Posterior vena cava (tissue), 2 donors: ENCODE measurements at regions of chr5 and their contacts with region 1.

Region 1: DNA sequence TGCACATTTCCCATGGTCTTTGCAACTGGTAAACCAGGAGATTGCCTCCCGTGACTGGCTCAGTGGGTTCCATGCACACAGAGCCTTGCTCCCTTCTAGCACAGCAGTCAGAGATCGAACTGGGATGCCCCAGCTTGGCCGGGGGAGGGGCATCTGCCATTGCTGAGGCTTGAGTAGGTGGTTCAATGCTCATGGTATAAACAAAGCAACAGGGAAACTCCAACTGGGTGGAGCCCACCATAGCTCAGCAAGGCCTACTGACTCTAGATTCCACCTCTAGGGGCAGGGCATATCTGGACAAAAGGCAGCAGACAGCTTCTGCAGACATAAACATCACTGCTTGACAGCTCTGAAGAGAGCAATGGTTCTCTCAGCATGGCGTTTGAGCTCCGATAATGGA is 67.0 kb upstream of the PPP1R2B start:
- DNase-seq: no peak

Region 2: DNA sequence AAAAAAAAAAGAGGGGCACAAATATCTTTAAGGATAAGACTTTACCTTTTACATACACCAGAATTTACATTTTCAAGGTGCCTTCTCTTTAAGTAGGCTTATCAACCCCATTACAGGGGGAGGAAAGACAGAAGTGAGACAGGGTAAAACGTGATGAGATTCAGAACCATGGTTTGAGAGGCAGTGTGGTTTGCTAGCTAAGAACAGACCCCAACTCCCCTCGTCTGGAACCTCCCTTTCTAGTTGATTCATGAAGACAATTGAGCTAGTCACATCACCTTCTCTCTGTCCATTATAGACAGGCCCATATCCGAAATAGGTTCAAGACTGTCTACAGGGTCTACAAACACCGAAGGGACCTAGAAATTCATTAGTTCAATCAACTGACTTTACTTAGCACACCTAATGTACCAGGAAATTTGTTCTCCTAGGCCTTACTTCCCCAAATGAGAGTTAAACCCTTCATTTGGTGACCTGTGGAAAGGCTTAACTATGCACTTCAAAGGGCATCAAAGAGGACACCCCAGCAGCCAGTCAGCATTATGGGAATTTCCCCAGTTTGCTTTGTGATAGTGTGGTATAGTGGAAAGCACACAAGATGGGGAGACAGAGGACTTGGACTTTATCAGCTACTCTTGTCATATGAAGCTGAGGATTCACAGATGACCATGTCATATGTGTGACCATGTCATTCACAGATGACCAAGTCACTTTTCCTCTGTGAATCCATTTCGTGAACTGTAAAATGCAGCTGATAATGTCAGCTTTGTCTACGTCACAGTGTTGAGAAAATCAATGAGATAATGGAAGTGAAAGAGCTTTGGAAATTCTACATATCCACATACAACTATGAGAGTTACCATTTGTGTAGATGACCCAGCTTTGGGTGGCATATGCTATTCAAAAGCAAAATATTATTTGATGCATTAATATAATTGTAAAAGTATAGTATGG is 442.7 kb after region 1 on chr5:
- intact Hi-C with region 1: loop called in 1 of 2 experiments (anchors 5 kb)
- DNase-seq: no peak

Region 3: GRCh38 chr5:157842787-157843186 is 1059.7 kb after region 1 on chr5:
- intact Hi-C with region 1: no loop called
- DNase-seq: no peak